A549 (cell line): ENCODE measurements at regions of chr2 and their contacts with region 1.

Region 1: DNA sequence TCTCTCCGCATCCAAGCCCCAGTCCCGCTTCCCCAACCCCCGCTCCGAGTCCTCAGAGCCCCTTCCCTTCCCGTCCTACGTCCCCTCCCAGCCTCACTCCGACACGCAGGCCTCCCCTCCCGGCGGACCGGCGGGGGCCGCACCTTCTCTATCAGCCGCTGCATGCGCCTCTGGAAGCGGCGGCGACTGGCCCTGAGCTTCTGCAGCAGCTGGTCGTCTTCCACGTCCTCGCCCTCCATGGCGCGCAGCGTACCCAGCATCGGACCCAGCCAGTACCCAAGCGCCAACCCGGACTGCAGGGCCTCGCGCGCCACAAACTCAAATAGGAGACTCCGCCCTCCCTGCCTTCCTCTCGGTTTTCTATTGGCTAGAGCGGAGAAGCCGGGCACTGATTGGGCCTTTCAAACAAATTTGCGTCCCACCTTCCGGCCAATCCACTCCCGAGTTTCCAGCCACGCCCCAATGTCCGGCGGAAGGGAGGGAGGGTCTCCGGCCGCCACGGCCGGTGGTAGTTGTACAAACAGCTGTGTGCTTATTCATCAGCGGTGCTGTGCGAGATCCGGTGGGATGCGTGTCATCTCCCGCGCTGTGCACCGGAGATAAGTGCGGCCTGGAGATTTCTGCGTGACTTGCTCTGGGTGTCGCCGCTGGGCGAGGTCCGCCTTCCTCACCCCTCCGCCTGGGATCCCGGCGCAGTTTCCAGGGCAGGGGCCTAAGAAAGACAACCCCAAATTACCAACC is at the start of gene HJURP:
- DNase-seq: peak; percentile 95 to 97
- ATAC-seq: peak; percentile 88 to 91
- H3K4me3 ChIP-seq: peak within 1 kb of the TSS; percentile 76
- H3K27ac ChIP-seq: peak within 1 kb of the TSS; percentile 85 to 97
- H3K4me1 ChIP-seq: peaks cover 50% of the 10 kb centered on the region
- CTCF ChIP-seq: no peak
- EP300 ChIP-seq: no peak
- POLR2A ChIP-seq: peak; percentile 78
- RAD21 ChIP-seq: no peak
- polyA plus RNA-seq, gene HJURP: 111 and 119 TPM in 2 replicates

Region 2: GRCh38 chr2:233566141-233566960 is 288.1 kb before region 1 on chr2 and contains the start of gene USP40:
- CTCF ChIA-PET with region 1: no interaction called
- POLR2A ChIA-PET with region 1: no interaction called
- DNase-seq: peak; percentile 77 to 95
- ATAC-seq: peak; percentile 99 to 100
- H3K4me3 ChIP-seq: peak within 1 kb of the TSS; percentile 63
- H3K27ac ChIP-seq: peak within 1 kb of the TSS; percentile 97 to 100
- H3K4me1 ChIP-seq: peaks cover 17% of the 10 kb centered on the region
- CTCF ChIP-seq: no peak
- EP300 ChIP-seq: no peak
- POLR2A ChIP-seq: peak; percentile 81
- RAD21 ChIP-seq: peak in 1 of 2 experiments; percentile 16; a peak in 1 of 5 replicates
- polyA plus RNA-seq, gene USP40: 57.0 and 65.3 TPM in 2 replicates

Region 3: GRCh38 chr2:233656443-233656842 is 198.0 kb before region 1 on chr2:
- CTCF ChIA-PET with region 1: no interaction called
- POLR2A ChIA-PET with region 1: no interaction called
- DNase-seq: no peak
- ATAC-seq: no peak
- H3K4me3 ChIP-seq: no peak overlapping the region
- H3K27ac ChIP-seq: 0 out of 6 replicates have a peak overlapping the region, but pooled peaks of 1 of the 2 experiments have one; percentile 42
- H3K4me1 ChIP-seq: no peaks in the 10 kb centered on the region
- CTCF ChIP-seq: no peak
- EP300 ChIP-seq: no peak
- POLR2A ChIP-seq: no peak
- RAD21 ChIP-seq: no peak

Region 4: DNA sequence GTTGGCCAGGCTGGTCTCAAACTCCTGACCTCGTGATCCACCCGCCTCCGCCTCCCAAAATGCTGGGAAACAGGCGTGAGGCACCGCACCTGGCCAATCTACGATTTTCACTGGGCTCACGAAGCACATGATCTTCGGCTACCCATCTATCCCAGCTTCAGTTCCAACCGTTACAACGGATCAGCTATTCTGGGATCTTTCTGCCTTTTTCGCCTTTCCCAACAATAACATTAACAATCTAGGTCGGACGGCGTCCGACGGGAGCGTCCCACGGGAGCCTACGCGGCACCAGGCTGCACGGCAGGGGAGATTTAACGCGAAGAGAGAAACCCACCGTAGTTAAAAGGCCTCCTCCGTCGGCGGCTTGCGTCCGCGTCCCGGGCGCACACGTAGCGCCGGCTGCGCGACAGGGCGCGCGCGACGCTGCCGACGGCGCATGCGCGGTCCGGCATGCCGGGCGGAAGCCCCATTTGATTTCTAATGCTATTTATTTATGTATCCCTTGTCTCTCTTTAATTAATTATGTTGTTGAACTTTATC is 13.7 kb after region 1 on chr2 and contains the start of gene MSL3B:
- CTCF ChIA-PET with region 1: interaction called, 31 read pairs
- POLR2A ChIA-PET with region 1: interaction called, 5 read pairs
- DNase-seq: peak; percentile 64 to 82
- ATAC-seq: peak; percentile 81 to 90
- H3K4me3 ChIP-seq: peak within 1 kb of the TSS; percentile 68
- H3K27ac ChIP-seq: peak within 1 kb of the TSS; percentile 92 to 93
- H3K4me1 ChIP-seq: no peaks in the 10 kb centered on the region
- CTCF ChIP-seq: no peak
- EP300 ChIP-seq: no peak
- POLR2A ChIP-seq: peak; percentile 72
- RAD21 ChIP-seq: no peak

Region 5: DNA sequence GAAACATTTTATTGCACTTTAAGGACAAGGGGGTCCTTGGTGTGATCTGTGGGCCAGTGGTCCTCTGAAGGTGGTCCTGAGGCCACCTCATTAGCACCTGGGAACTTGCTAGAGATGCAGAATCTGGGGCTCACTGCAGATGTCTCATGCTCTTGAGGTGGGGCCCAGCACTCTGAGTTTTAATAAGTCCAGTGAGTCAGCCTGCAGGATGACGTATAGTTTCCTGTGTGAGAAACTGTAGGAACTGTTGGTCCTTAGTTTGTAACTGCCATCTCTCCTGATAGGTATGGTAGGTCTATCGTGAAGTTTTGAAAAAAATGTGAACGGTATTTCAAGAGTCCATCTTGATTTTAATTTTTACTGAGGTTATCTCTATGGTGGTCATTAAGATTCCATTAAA is 65.5 kb after region 1 on chr2:
- CTCF ChIA-PET with region 1: interaction called, 39 read pairs
- POLR2A ChIA-PET with region 1: no interaction called
- DNase-seq: no peak
- ATAC-seq: no peak
- H3K4me3 ChIP-seq: no peak overlapping the region
- H3K27ac ChIP-seq: no peak overlapping the region
- H3K4me1 ChIP-seq: no peaks in the 10 kb centered on the region
- CTCF ChIP-seq: no peak
- EP300 ChIP-seq: no peak
- POLR2A ChIP-seq: no peak
- RAD21 ChIP-seq: no peak

Region 6: DNA sequence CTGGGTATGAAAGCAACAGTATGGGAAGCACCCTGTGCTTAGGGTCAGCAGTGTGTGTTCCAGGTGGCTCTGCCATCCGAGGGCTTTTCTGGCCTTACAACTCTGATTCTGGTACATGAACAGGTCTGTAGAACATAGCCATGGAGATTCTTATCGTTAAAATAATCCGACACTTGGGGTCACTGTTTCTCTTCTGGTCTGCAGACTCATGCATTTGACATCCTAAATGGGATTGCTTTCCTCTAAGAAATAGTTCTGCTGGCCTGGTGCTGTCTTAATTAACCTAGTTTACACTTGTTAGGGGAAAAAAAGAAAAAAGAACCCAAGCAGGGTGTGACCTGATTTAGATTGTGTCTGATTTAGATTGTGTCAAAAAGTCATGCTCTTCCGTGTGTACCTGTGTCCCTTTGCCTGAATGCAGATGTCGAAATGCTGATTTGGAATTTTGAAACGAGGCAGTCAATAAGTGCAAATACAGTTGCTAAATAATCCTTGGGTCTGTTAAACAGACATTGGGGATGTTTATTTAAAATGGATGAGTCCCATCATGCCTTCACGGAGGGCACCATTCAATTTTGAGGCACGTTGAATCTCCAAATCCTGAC is 122.4 kb after region 1 on chr2:
- CTCF ChIA-PET with region 1: interaction called, 22 read pairs
- POLR2A ChIA-PET with region 1: interaction called, 6 read pairs
- DNase-seq: peak; percentile 64 to 84
- ATAC-seq: peak; percentile 44 to 80; a peak in 4 of 6 replicates
- H3K4me3 ChIP-seq: no peak overlapping the region
- H3K27ac ChIP-seq: peak overlapping the region; percentile 84 to 98
- H3K4me1 ChIP-seq: peaks cover 83% of the 10 kb centered on the region
- CTCF ChIP-seq: peak; percentile 94
- EP300 ChIP-seq: peak in 1 of 2 experiments; percentile 42; a peak in 2 of 5 replicates
- POLR2A ChIP-seq: no peak
- RAD21 ChIP-seq: peak; percentile 97 to 98

Region 7: GRCh38 chr2:233996000-233996399 is 141.6 kb after region 1 on chr2:
- CTCF ChIA-PET with region 1: no interaction called
- POLR2A ChIA-PET with region 1: no interaction called
- DNase-seq: no peak
- ATAC-seq: no peak
- H3K4me3 ChIP-seq: no peak overlapping the region
- H3K27ac ChIP-seq: no peak overlapping the region
- H3K4me1 ChIP-seq: no peaks in the 10 kb centered on the region
- CTCF ChIP-seq: no peak
- EP300 ChIP-seq: no peak
- POLR2A ChIP-seq: no peak
- RAD21 ChIP-seq: no peak

Region 8: DNA sequence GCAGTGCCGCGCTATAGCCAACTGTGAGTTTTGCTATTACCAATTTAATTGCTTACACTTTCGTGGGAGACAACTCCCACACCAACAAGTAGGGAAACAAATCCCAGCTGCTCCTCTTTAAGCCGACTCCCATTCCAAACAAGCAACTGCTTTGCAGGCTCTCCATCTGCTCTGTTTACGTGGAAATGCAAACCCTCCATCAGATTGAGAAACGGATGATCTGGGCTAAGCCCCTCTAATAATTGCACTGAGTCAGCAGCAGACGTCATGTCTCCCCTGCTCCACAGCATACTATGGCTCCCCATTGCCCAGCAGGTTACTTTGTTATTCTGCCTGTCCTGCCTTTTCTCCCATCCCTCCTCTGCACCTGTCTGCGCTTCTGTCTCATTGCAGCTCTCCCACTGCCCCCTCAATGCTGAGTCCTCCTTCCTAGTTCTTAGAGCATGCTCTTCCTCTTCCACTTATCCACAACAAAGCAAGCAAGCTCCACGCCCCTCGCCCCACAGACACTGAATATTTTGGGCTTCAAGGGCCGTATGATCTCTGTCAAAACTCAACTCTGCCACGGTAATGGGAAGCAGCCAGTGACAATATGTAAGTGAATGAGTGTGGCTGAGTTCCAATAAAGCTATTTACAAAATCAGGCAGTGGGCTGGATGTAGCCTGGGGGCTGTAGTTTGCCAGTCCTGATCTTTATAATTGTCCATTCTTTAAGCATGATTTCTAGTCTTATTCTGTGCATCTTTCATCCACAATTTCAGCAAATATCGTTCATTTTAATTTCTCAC is 682.0 kb after region 1 on chr2:
- CTCF ChIA-PET with region 1: interaction called, 15 read pairs
- POLR2A ChIA-PET with region 1: no interaction called
- DNase-seq: no peak
- ATAC-seq: no peak
- H3K4me3 ChIP-seq: no peak overlapping the region
- H3K27ac ChIP-seq: no peak overlapping the region
- H3K4me1 ChIP-seq: no peaks in the 10 kb centered on the region
- CTCF ChIP-seq: no peak
- EP300 ChIP-seq: no peak
- POLR2A ChIP-seq: no peak
- RAD21 ChIP-seq: no peak